Calu3 (cell line): ENCODE measurements at regions of chr3 and their contacts with region 1.

Region 1: GRCh38 chr3:191388823-191389222 is 58.5 kb upstream of the UTS2B start:
- DNase-seq: no peak
- H3K4me3 Mint-ChIP-seq: no peak overlapping the region
- H3K27ac Mint-ChIP-seq: no peak overlapping the region
- H3K4me1 Mint-ChIP-seq: no peaks in the 10 kb centered on the region
- H3K27me3 Mint-ChIP-seq: no peaks in the 10 kb centered on the region
- CTCF ChIP-seq: peak; percentile 46

Region 2: DNA sequence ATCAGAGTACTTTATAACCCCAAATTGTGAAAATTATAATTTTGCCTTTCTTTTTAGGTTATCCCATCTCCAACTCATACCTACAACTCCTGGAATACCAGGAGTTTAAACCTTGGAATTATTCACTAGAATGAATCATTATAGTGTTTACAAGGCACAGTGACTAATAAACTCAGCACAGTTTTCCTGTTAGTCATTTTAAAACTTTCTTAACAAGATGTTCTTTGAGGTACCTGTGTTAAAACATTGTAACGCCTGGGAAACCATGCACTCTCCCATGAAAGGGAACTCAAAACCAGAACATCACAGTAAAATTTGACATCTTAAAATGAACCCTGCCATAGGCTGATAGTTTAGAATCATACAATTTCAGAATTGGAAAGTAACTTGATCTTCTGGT is 322.2 kb before region 1 on chr3:
- CTCF ChIA-PET with region 1: no interaction called
- intact Hi-C with region 1: loop called (anchors 10 kb)
- DNase-seq: no peak
- H3K4me3 Mint-ChIP-seq: no peak overlapping the region
- H3K27ac Mint-ChIP-seq: no peak overlapping the region
- H3K4me1 Mint-ChIP-seq: peaks cover 37% of the 10 kb centered on the region
- H3K27me3 Mint-ChIP-seq: no peaks in the 10 kb centered on the region
- CTCF ChIP-seq: no peak

Region 3: GRCh38 chr3:191136347-191136746 is 252.5 kb before region 1 on chr3:
- CTCF ChIA-PET with region 1: no interaction called
- intact Hi-C with region 1: loop called (anchors 5 kb)
- DNase-seq: peak; percentile 36
- H3K4me3 Mint-ChIP-seq: no peak overlapping the region
- H3K27ac Mint-ChIP-seq: no peak overlapping the region
- H3K4me1 Mint-ChIP-seq: peaks cover 18% of the 10 kb centered on the region
- H3K27me3 Mint-ChIP-seq: no peaks in the 10 kb centered on the region
- CTCF ChIP-seq: peak; percentile 56

Region 4: GRCh38 chr3:191244242-191244867 is 144.5 kb before region 1 on chr3:
- CTCF ChIA-PET with region 1: no interaction called
- intact Hi-C with region 1: loop called (anchors 1 kb)
- DNase-seq: no peak
- H3K4me3 Mint-ChIP-seq: no peak overlapping the region
- H3K27ac Mint-ChIP-seq: no peak overlapping the region
- H3K4me1 Mint-ChIP-seq: peaks cover 27% of the 10 kb centered on the region
- H3K27me3 Mint-ChIP-seq: no peaks in the 10 kb centered on the region
- CTCF ChIP-seq: peak; percentile 54

Region 5: DNA sequence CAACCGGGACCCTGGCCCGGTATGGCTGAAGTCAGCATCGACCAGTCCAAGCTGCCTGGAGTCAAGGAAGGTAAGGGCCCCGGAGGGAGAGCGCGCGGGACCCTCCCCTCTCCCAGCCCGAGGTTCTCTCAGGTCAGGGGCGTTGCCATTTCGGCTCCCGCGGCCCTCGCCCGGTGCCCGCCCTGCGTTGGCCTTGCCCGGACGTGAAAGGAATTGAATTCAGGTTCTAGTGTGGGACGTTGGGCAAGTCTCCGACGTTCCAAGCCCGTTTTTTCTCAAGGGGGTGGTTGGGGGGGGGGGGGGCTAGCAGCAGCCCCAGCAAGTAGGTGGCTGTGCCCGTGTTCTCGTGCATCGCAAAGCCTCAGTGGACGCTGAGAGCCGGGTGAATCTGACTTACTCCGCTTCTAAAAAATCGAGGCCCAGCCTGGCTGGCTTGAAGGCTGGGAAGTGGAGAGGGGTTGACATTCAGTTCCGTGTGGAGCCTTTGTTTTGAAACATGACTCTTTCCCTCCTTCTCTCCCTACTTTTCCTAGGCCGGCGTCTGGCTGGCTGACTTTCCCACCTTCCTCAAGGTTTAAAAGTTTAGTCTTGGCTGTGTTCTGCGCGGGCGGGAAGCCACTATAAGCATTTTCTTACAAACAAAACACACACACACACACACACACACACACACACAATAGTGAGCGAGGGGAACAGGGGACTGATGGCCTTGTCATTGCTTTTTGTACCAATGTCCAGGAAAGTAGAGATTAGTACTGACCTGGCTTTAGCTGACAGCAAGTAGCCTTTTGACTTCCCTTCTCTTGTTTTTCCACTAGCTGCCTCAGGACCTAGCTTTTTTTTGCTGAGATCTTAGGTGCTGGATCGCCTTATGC is 58.9 kb before region 1 on chr3 and contains the start of gene UTS2B:
- CTCF ChIA-PET with region 1: no interaction called
- intact Hi-C with region 1: loop called (anchors 5 kb)
- DNase-seq: peak; percentile 66
- H3K4me3 Mint-ChIP-seq: peak within 1 kb of the TSS; percentile 84
- H3K27ac Mint-ChIP-seq: peak within 1 kb of the TSS; percentile 86
- H3K4me1 Mint-ChIP-seq: peaks cover 61% of the 10 kb centered on the region
- H3K27me3 Mint-ChIP-seq: no peaks in the 10 kb centered on the region
- CTCF ChIP-seq: no peak
- total RNA-seq, gene UTS2B: 1.5 and 1.6 TPM in 2 replicates